CD4-positive, alpha-beta T cell (primary cell): ENCODE measurements at regions of chr22 and their contacts with region 1.

Region 1: DNA sequence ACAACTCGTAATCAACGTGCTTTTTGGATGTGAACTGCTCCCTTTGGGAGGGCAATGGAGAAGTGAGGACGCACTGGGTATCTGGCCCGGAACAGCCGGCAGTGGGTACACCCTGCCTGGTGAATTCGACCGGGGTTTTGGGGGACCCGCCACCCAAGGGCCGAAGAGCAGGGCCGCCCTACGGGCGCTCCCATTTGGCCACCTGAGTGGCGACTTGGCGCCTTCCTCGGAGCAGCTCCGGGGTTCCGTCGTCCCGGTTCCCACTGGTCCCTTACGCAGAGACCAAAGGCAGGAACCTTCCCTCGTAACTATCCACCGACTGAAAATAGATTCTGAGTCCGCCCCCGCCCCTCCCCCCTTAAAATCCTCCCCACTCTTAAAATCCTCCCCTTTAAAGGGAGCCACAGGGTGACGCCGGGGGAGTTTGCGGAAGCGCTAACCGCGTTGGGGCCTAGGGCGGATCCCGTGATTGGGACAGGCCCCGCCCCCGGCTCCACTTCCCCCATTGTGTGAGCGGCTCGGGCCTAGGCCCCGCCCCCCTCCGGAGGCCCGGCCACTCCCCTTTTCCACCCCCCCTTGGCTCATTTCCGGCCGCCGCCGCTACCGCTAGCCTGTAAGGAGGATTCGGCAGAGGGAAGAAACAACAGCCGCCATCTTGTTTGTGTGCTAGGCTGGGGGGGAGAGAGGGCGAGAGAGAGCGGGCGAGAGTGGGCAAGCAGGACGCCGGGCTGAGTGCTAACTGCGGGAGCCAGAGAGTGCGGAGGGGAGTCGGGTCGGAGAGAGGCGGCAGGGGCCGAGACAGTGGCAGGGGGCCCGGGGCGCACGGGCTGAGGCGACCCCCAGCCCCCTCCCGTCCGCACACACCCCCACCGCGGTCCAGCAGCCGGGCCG is 1.0 kb upstream of the EP300 start:
- DNase-seq: peak; percentile 98 to 100 (median 99)
- ATAC-seq: peak; percentile 85
- H3K4me3 ChIP-seq: peak overlapping the region; percentile 97
- H3K4me3 Mint-ChIP-seq: peak overlapping the region; percentile 99
- H3K27ac ChIP-seq: peak overlapping the region; percentile 97 to 100
- H3K27ac Mint-ChIP-seq: peak overlapping the region; percentile 98
- H3K4me1 ChIP-seq: peaks cover 15% of the 10 kb centered on the region
- H3K4me1 Mint-ChIP-seq: peaks cover 34% of the 10 kb centered on the region
- H3K27me3 ChIP-seq: no peaks in the 10 kb centered on the region
- H3K27me3 Mint-ChIP-seq: no peaks in the 10 kb centered on the region
- CTCF ChIP-seq: no peak

Region 2: GRCh38 chr22:40818747-40819598 is 272.4 kb before region 1 on chr22 and contains the start of gene SLC25A17:
- CTCF ChIA-PET with region 1: no interaction called
- POLR2A ChIA-PET with region 1: interaction called, 4 read pairs
- intact Hi-C with region 1: loop called in 1 of 2 experiments (anchors 2 kb)
- DNase-seq: peak; percentile 78 to 94 (median 86)
- ATAC-seq: peak; percentile 89
- H3K4me3 ChIP-seq: peak within 1 kb of the TSS; percentile 71
- H3K4me3 Mint-ChIP-seq: peak within 1 kb of the TSS; percentile 99
- H3K27ac ChIP-seq: peak within 1 kb of the TSS; percentile 61 to 68
- H3K27ac Mint-ChIP-seq: peak within 1 kb of the TSS; percentile 94
- H3K4me1 ChIP-seq: peaks cover 24% of the 10 kb centered on the region
- H3K4me1 Mint-ChIP-seq: peaks cover 46% of the 10 kb centered on the region
- H3K27me3 ChIP-seq: no peaks in the 10 kb centered on the region
- H3K27me3 Mint-ChIP-seq: no peaks in the 10 kb centered on the region
- CTCF ChIP-seq: peak; percentile 2
- total RNA-seq, gene SLC25A17: 2.8 to 4.0 TPM

Region 3: GRCh38 chr22:40922484-40923303 is 168.7 kb before region 1 on chr22:
- CTCF ChIA-PET with region 1: interaction called, 6 read pairs
- POLR2A ChIA-PET with region 1: interaction called, 24 read pairs
- intact Hi-C with region 1: loop called in 1 of 2 experiments (anchors 1 kb)
- DNase-seq: peak in 6 of 14 experiments; percentile 1 to 84 (median 46)
- ATAC-seq: peak; percentile 98
- H3K4me3 ChIP-seq: no peak overlapping the region
- H3K4me3 Mint-ChIP-seq: peak overlapping the region; percentile 0
- H3K27ac ChIP-seq: no peak overlapping the region
- H3K27ac Mint-ChIP-seq: no peak overlapping the region
- H3K4me1 ChIP-seq: peaks cover 3% of the 10 kb centered on the region
- H3K4me1 Mint-ChIP-seq: peaks cover 5% of the 10 kb centered on the region
- H3K27me3 ChIP-seq: no peaks in the 10 kb centered on the region
- H3K27me3 Mint-ChIP-seq: no peaks in the 10 kb centered on the region
- CTCF ChIP-seq: peak; percentile 78

Region 4: GRCh38 chr22:41070665-41071331 is 20.6 kb before region 1 on chr22:
- CTCF ChIA-PET with region 1: no interaction called
- POLR2A ChIA-PET with region 1: interaction called, 11 read pairs
- intact Hi-C with region 1: no loop called
- DNase-seq: no peak
- ATAC-seq: no peak
- H3K4me3 ChIP-seq: no peak overlapping the region
- H3K4me3 Mint-ChIP-seq: no peak overlapping the region
- H3K27ac ChIP-seq: no peak overlapping the region
- H3K27ac Mint-ChIP-seq: no peak overlapping the region
- H3K4me1 ChIP-seq: peaks cover 11% of the 10 kb centered on the region
- H3K4me1 Mint-ChIP-seq: peaks cover 7% of the 10 kb centered on the region
- H3K27me3 ChIP-seq: no peaks in the 10 kb centered on the region
- H3K27me3 Mint-ChIP-seq: no peaks in the 10 kb centered on the region
- CTCF ChIP-seq: no peak

Region 5: GRCh38 chr22:41117127-41117965 is 26.0 kb after region 1 on chr22:
- CTCF ChIA-PET with region 1: interaction called, 3 read pairs
- POLR2A ChIA-PET with region 1: interaction called, 12 read pairs
- intact Hi-C with region 1: no loop called
- DNase-seq: no peak
- ATAC-seq: no peak
- H3K4me3 ChIP-seq: no peak overlapping the region
- H3K4me3 Mint-ChIP-seq: no peak overlapping the region
- H3K27ac ChIP-seq: no peak overlapping the region
- H3K27ac Mint-ChIP-seq: no peak overlapping the region
- H3K4me1 ChIP-seq: peaks cover 17% of the 10 kb centered on the region
- H3K4me1 Mint-ChIP-seq: peaks cover 54% of the 10 kb centered on the region
- H3K27me3 ChIP-seq: no peaks in the 10 kb centered on the region
- H3K27me3 Mint-ChIP-seq: no peaks in the 10 kb centered on the region
- CTCF ChIP-seq: no peak

Region 6: GRCh38 chr22:41197038-41197972 is 105.9 kb after region 1 on chr22:
- CTCF ChIA-PET with region 1: no interaction called
- POLR2A ChIA-PET with region 1: interaction called, 3 read pairs
- intact Hi-C with region 1: loop called (anchors 1 to 5 kb)
- DNase-seq: peak; percentile 62 to 93 (median 76)
- ATAC-seq: peak; percentile 85
- H3K4me3 ChIP-seq: peak overlapping the region; percentile 92
- H3K4me3 Mint-ChIP-seq: peak overlapping the region; percentile 95
- H3K27ac ChIP-seq: no peak overlapping the region
- H3K27ac Mint-ChIP-seq: peak overlapping the region; percentile 28
- H3K4me1 ChIP-seq: peaks cover 19% of the 10 kb centered on the region
- H3K4me1 Mint-ChIP-seq: peaks cover 14% of the 10 kb centered on the region
- H3K27me3 ChIP-seq: no peaks in the 10 kb centered on the region
- H3K27me3 Mint-ChIP-seq: no peaks in the 10 kb centered on the region
- CTCF ChIP-seq: no peak

Region 7: DNA sequence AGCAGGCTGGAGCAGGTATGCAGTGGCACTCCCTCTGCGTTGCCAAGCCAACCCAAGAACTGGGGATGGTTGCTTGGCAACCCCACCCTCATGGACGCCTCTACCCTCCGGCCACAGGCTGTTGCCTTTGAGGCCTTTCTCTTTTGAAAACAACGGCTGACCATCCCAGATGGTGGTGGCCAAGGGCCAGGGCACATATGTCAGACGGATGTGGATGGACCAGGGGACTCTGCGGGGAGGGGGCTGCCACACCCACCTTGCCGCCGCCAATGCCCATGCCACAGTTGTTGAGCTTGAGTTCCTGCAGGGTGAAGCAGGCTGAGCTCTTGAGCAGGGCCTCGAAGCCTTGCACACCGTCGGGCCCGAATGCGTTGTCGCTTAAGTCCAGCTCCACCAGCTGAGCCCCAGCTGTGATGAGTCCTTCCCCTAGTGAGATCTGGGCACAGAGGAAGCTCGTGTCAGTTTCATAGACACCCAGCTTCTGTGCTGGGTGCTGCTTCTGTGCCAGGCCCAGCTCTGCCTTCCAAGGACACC is 173.1 kb after region 1 on chr22:
- CTCF ChIA-PET with region 1: no interaction called
- POLR2A ChIA-PET with region 1: no interaction called
- intact Hi-C with region 1: no loop called
- DNase-seq: no peak
- ATAC-seq: no peak
- H3K4me3 ChIP-seq: no peak overlapping the region
- H3K4me3 Mint-ChIP-seq: no peak overlapping the region
- H3K27ac ChIP-seq: no peak overlapping the region
- H3K27ac Mint-ChIP-seq: no peak overlapping the region
- H3K4me1 ChIP-seq: no peaks in the 10 kb centered on the region
- H3K4me1 Mint-ChIP-seq: no peaks in the 10 kb centered on the region
- H3K27me3 ChIP-seq: no peaks in the 10 kb centered on the region
- H3K27me3 Mint-ChIP-seq: no peaks in the 10 kb centered on the region
- CTCF ChIP-seq: no peak

Region 8: DNA sequence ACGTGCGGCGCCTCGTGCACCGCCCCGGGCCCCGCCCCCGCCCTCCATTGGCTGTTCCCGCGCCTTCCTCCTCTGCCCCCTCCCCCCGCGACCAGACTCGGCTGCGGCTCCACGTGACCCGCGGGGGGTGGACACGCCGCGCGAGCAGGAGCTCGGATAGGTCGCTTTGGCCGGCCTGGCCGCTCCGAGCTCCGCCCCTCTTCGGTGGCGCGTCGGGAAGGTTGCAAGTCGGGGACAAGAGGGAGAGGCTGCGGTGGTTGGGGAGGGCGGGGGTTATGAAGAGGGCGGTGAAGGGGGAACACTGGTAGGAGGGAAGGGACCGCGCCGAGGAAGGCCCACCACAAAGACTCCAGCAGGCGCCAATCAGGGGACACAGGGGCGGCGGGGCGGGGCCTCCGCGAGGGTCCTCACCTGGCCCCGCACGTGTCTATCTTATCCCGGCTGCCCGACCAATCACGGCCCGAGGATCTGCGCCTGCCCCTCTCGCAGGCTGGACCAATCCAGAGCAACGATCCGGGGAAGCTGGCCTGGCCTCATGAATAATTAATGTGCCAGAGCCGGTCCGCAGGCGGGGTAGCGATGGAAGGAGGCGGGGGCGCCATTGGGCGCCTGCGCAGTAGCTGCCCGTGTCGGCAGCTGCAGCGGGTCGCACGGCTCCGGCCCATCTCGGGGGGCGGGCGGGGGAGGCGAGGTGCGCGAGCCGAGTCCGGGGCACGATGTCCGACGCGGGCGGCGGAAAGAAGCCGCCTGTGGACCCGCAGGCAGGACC is 290.1 kb after region 1 on chr22 and contains the start of gene TEF:
- CTCF ChIA-PET with region 1: no interaction called
- POLR2A ChIA-PET with region 1: interaction called, 13 read pairs
- intact Hi-C with region 1: no loop called
- DNase-seq: peak; percentile 96 to 99 (median 98)
- ATAC-seq: peak; percentile 79
- H3K4me3 ChIP-seq: peak within 1 kb of the TSS; percentile 66
- H3K4me3 Mint-ChIP-seq: peak within 1 kb of the TSS; percentile 98
- H3K27ac ChIP-seq: peak within 1 kb of the TSS; percentile 78 to 96
- H3K27ac Mint-ChIP-seq: peak within 1 kb of the TSS; percentile 99
- H3K4me1 ChIP-seq: peaks cover 20% of the 10 kb centered on the region
- H3K4me1 Mint-ChIP-seq: peaks cover 31% of the 10 kb centered on the region
- H3K27me3 ChIP-seq: no peaks in the 10 kb centered on the region
- H3K27me3 Mint-ChIP-seq: no peaks in the 10 kb centered on the region
- CTCF ChIP-seq: no peak
- total RNA-seq, gene TEF: 2.4 to 2.6 TPM